Activated CD4-positive, alpha-beta memory T cell treated with anti-CD3 and anti-CD28 coated beads for 36 hours (primary cell): ENCODE measurements at regions of chr1 and their contacts with region 1.

Region 1: DNA sequence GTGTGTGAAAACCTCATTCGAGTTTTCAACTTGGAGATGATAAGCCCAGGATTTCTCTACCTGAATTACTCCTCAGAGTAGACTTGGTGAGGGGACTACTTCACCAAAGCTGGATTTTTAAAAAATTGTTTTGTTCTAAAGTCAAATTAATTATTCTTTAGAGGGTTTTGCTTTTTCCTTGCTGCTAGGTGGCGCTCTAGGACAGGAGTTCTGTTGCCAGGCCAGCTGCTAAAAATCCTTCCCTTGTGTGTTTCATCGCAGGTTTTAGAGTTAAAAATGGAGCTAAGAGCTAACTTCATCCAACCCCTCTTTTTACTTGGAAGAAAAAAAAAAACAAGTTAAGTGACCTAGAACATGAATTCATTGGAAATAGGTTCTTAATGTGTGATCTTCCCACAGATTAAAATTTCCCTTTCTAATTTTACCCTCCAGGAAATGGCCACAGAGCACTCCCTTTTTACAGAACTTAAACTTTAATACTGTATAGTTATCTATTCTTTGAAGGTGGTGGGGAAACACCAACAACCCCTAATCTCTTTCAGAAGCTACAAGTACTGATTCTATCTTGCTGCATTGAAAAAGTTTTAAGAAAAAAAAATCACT is 36.7 kb upstream of the FAM163A start:
- DNase-seq: peak; percentile 73
- H3K4me3 Mint-ChIP-seq: no peak overlapping the region
- H3K27ac Mint-ChIP-seq: no peak overlapping the region
- H3K4me1 Mint-ChIP-seq: peaks cover 19% of the 10 kb centered on the region
- H3K27me3 Mint-ChIP-seq: no peaks in the 10 kb centered on the region

Region 2: DNA sequence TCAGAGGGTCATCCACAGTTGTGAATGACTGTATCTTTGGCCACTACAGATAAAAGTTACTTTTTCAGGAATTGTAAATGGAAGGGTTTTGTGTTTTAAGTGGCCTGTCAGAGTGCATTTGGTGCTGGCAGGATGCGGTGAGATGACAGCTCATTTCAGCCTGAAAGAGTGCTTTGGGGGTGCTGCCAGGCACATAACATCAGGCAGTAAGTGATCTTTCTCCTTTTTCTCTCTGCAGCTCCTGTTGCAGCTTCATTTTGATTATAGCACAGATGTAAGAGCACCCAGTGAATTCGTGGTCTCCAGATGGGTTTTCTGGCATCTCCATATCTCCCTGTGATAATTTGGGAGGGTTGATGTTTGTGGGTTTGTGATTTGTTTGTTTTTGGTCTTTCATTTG is 21.8 kb after region 1 on chr1:
- CTCF ChIA-PET with region 1: interaction called, 13 read pairs
- POLR2A ChIA-PET with region 1: no interaction called
- intact Hi-C with region 1: no loop called
- DNase-seq: no peak
- H3K4me3 Mint-ChIP-seq: no peak overlapping the region
- H3K27ac Mint-ChIP-seq: no peak overlapping the region
- H3K4me1 Mint-ChIP-seq: no peaks in the 10 kb centered on the region
- H3K27me3 Mint-ChIP-seq: peaks cover 4% of the 10 kb centered on the region

Region 3: DNA sequence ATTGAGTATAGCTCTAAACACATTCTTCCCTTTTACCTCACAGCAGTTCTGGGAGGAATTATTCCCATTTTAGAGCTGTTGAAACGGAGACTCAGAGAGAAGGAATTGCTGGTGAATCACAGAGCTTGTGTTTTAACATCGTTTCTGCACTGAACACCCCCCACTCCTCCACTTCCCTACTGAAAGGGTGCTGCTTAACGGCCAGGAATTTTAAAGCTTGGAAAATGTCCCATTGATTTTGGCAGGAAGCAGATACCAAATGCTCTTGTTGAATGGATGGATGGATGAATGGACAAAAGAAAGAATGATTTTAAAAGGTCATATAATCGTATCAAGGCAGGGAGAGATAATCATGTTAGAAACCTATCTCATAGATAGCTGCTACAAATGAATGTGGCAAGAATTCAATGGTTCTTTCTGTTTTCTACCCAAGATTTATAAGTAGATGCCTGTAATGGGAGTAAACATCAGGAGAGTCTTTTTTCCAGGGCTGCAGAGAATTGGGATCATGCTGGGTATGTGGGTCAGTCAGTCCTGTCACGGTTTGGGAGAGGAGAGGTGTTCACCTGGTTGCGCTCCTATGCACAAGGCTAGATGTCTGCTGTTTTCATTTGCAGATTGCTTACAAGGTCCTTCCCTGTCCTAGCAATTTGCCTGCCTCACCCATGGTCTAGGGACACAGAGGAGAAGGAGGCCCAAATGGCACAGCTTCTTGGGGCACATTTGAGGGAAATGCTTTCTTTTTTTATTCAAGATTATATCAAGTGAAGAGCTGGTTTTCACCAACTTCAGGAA is 55.6 kb after region 1 on chr1:
- CTCF ChIA-PET with region 1: interaction called, 11 read pairs
- POLR2A ChIA-PET with region 1: no interaction called
- intact Hi-C with region 1: no loop called
- DNase-seq: no peak
- H3K4me3 Mint-ChIP-seq: no peak overlapping the region
- H3K27ac Mint-ChIP-seq: no peak overlapping the region
- H3K4me1 Mint-ChIP-seq: no peaks in the 10 kb centered on the region
- H3K27me3 Mint-ChIP-seq: no peaks in the 10 kb centered on the region

Region 4: DNA sequence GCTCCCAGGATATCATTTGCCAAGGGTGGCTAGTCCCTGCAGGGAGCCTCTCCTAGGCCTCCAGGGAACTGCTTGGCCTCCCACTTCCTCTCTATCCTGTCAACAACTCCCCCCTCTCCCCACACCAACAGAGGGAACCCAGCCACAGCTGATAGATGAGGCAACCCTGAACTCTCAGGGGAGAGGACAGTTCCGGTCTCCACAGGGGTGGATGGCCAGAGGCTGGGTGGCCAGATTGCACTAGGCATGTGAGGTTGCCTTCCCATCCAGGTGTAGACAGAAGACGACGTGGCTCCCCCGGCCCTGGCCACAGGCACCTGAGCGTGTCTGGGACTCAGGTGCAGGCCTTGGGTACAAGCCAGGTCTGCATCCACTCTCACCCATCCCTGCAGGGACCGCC is 117.8 kb after region 1 on chr1:
- CTCF ChIA-PET with region 1: interaction called, 774 read pairs
- POLR2A ChIA-PET with region 1: no interaction called
- intact Hi-C with region 1: no loop called
- DNase-seq: no peak
- H3K4me3 Mint-ChIP-seq: no peak overlapping the region
- H3K27ac Mint-ChIP-seq: no peak overlapping the region
- H3K4me1 Mint-ChIP-seq: no peaks in the 10 kb centered on the region
- H3K27me3 Mint-ChIP-seq: no peaks in the 10 kb centered on the region